ENCODE measurements at regions of chr6 and their contacts with region 1.

Region 1: GRCh38 chr6:105402939-105403935 is at the start of gene PREP:
- DNase-seq: peak; percentile 83
- H3K4me3 ChIP-seq: peak within 1 kb of the TSS; percentile 81 to 86
- H3K27ac ChIP-seq: peak within 1 kb of the TSS; percentile 61 to 72
- H3K4me1 ChIP-seq: no peaks in the 10 kb centered on the region
- H3K27me3 ChIP-seq: no peaks in the 10 kb centered on the region
- CTCF ChIP-seq: peak; percentile 42 to 71 (median 59)
- POLR2A ChIP-seq: peak; percentile 55
- total RNA-seq, gene PREP: 8.9 to 54.5 TPM

Region 2: GRCh38 chr6:104995989-104996617 is 407.1 kb before region 1 on chr6:
- intact Hi-C with region 1: loop called (anchors 1 kb)
- DNase-seq: peak; percentile 10
- H3K4me3 ChIP-seq: no peak overlapping the region
- H3K27ac ChIP-seq: peak overlapping the region; percentile 49 to 51
- H3K4me1 ChIP-seq: no peaks in the 10 kb centered on the region
- H3K27me3 ChIP-seq: no peaks in the 10 kb centered on the region
- CTCF ChIP-seq: peak in 3 of 4 experiments; percentile 30 to 60 (median 59)
- POLR2A ChIP-seq: no peak

Region 3: DNA sequence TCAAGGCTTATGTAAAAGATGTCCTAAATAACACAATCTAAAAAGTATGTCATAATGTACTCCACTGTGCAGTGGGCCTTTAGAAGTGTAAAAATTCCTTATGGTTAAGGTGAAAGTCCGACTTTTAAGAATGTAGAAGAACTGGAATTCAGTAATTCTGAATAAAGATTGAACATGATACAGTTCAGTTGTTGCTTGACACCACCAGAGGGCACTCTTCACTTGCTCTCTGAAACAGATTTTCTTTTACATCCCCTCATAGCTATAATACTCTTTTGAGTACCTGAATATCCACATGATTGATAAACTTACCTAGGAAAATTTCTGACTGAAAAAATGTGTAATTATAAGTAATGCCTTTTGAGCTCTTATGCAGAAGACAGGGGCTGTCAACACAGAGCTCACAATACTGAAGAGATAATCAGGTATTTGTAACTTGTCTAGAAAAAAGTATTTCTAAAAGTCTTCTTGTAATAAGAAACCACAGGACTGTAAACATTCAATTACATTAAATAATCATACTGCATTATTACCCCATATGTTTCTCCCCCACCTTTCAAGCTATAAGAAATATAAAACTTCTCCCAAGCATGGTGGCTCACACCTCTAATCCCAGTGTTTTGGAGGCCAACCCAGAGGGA is 315.5 kb before region 1 on chr6:
- intact Hi-C with region 1: loop called (anchors 2 kb)
- DNase-seq: peak; percentile 62
- H3K4me3 ChIP-seq: no peak overlapping the region
- H3K27ac ChIP-seq: no peak overlapping the region
- H3K4me1 ChIP-seq: no peaks in the 10 kb centered on the region
- H3K27me3 ChIP-seq: no peaks in the 10 kb centered on the region
- CTCF ChIP-seq: peak; percentile 77 to 91 (median 84)
- POLR2A ChIP-seq: no peak

Measured in prostate gland (tissue), 2 donors.